Activated CD4-positive, alpha-beta T cell treated with anti-CD3 and anti-CD28 coated beads for 36 hours (primary cell): ENCODE measurements at regions of chr6 and their contacts with region 1.

Region 1: DNA sequence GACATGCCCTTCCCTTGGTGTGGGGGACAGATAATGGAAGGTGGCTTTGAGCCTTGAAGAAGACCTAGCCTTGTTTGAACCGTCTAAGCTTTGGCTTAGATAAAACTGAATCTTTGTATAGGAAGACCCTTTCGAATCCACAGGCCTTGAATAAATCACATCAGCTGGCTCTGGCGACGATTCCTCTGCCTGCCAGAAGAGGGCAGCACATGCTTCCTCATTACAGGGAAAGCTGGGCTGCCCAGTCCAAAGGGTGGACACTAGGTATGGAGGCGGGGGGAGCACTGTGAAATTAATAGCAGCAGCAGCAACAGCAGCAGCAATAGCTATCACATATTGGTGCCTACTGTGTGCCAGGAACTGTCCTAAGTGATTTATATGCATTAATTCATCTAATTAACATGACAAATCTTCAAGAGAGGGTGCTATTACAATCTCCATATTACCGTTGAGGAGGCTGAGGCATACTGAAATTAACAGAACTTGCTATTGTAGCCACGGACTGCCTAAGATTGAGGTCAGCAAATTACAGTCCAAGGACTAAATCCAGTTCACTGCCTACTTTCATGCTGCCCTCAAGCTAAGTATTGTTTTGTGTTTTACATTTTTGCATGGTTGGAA is 85.1 kb downstream of the CLIC5 start:
- DNase-seq: peak; percentile 74
- ATAC-seq: peak; percentile 42
- H3K4me3 Mint-ChIP-seq: no peak overlapping the region
- H3K27ac Mint-ChIP-seq: no peak overlapping the region
- H3K4me1 Mint-ChIP-seq: peaks cover 3% of the 10 kb centered on the region
- H3K27me3 Mint-ChIP-seq: no peaks in the 10 kb centered on the region

Region 2: GRCh38 chr6:45946352-45946751 is 15.8 kb after region 1 on chr6:
- CTCF ChIA-PET with region 1: interaction called, 11 read pairs
- POLR2A ChIA-PET with region 1: no interaction called
- intact Hi-C with region 1: no loop called
- DNase-seq: peak; percentile 26
- ATAC-seq: no peak
- H3K4me3 Mint-ChIP-seq: no peak overlapping the region
- H3K27ac Mint-ChIP-seq: no peak overlapping the region
- H3K4me1 Mint-ChIP-seq: no peaks in the 10 kb centered on the region
- H3K27me3 Mint-ChIP-seq: no peaks in the 10 kb centered on the region

Region 3: DNA sequence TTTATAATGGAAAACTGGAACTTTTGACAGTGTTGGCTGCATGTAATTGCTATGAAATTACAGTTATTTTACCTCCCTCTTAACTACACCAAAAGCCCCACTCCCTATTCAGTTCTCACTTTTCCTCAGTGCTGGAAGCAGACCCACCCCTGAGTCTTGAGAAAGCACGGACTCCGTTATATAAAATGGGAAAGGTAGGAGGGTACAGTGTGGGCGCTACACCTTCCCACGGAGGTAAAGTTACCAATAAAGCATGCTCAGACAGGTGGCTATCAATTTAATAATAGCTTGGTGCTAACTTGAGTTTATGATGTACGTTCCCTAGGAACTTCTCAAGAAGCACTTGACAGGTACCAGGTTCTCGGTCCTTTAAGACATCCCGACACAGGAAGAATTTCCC is 26.1 kb after region 1 on chr6:
- CTCF ChIA-PET with region 1: no interaction called
- POLR2A ChIA-PET with region 1: no interaction called
- intact Hi-C with region 1: no loop called
- DNase-seq: no peak
- ATAC-seq: no peak
- H3K4me3 Mint-ChIP-seq: no peak overlapping the region
- H3K27ac Mint-ChIP-seq: no peak overlapping the region
- H3K4me1 Mint-ChIP-seq: no peaks in the 10 kb centered on the region
- H3K27me3 Mint-ChIP-seq: peaks cover 4% of the 10 kb centered on the region

Region 4: DNA sequence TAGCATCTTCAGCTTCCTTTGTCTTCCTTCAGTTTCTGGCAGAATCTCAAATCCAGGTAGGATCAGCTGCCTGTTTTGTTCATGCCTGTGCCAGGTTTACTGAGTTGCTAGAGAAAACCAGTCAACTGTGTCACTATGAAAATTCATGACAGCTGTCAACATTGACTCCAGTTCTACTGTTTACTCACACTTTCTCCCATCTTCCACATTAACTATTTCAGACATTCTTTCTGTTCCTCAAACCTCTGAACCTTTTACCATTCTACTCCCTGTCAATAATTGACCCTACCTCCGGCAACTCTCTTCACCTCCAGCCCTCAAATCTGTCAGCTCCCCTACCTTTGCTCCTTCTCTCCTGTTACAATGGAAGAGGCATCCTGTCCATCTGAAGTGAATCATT is 207.8 kb after region 1 on chr6:
- CTCF ChIA-PET with region 1: no interaction called
- POLR2A ChIA-PET with region 1: no interaction called
- intact Hi-C with region 1: no loop called
- DNase-seq: no peak
- ATAC-seq: no peak
- H3K4me3 Mint-ChIP-seq: no peak overlapping the region
- H3K27ac Mint-ChIP-seq: no peak overlapping the region
- H3K4me1 Mint-ChIP-seq: peaks cover 27% of the 10 kb centered on the region
- H3K27me3 Mint-ChIP-seq: no peaks in the 10 kb centered on the region

Region 5: DNA sequence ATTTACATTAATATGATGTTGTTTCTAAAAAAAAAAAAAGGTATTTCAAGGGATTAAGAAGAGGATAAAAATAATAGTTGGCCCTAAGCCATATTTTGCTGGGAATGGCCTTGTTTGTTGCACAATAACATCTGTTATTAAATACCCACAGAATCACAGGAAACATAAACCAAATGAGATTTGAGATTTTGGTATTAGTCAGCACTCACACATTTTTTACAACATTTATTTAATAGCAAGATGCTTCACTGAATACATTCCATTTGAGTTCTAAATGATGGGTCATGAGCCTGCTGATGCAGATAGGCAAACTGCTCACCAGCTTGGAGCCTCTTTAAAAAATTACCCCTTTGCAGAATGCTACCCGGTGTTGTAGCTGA is 333.2 kb after region 1 on chr6:
- CTCF ChIA-PET with region 1: no interaction called
- POLR2A ChIA-PET with region 1: no interaction called
- intact Hi-C with region 1: no loop called
- DNase-seq: no peak
- ATAC-seq: no peak
- H3K4me3 Mint-ChIP-seq: no peak overlapping the region
- H3K27ac Mint-ChIP-seq: no peak overlapping the region
- H3K4me1 Mint-ChIP-seq: no peaks in the 10 kb centered on the region
- H3K27me3 Mint-ChIP-seq: peaks cover 2% of the 10 kb centered on the region

Region 6: DNA sequence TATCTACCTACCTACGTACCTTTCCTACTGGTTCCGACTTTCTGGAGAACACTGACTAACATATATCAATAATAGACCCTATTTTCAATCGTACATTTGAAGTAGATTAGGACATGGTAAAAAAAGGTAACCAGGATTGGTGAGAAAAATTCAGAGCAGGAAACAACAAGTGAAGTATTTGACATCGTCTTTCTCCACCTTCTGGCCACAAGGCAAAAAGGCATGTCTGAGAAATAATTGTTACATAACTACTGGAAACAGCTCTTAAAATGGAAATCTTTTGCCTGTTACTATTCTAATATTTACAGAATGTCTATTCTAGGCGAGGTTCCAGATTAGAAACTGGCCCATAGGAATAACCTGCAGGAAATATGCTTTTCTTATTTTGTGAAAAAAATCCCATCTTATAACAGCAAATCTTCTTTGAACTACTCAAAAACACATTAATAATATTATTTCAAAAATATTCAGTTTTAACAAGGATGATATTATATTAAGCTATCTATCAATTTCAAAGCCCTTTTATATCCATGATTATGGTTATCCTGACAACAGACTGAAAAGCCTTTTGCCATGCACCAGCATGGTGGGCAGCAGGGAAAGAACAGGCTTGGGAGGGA is 479.9 kb after region 1 on chr6:
- CTCF ChIA-PET with region 1: interaction called, 9 read pairs
- POLR2A ChIA-PET with region 1: no interaction called
- intact Hi-C with region 1: loop called (anchors 1 to 5 kb)
- DNase-seq: peak; percentile 22
- ATAC-seq: no peak
- H3K4me3 Mint-ChIP-seq: no peak overlapping the region
- H3K27ac Mint-ChIP-seq: no peak overlapping the region
- H3K4me1 Mint-ChIP-seq: no peaks in the 10 kb centered on the region
- H3K27me3 Mint-ChIP-seq: peaks cover 5% of the 10 kb centered on the region

Region 7: DNA sequence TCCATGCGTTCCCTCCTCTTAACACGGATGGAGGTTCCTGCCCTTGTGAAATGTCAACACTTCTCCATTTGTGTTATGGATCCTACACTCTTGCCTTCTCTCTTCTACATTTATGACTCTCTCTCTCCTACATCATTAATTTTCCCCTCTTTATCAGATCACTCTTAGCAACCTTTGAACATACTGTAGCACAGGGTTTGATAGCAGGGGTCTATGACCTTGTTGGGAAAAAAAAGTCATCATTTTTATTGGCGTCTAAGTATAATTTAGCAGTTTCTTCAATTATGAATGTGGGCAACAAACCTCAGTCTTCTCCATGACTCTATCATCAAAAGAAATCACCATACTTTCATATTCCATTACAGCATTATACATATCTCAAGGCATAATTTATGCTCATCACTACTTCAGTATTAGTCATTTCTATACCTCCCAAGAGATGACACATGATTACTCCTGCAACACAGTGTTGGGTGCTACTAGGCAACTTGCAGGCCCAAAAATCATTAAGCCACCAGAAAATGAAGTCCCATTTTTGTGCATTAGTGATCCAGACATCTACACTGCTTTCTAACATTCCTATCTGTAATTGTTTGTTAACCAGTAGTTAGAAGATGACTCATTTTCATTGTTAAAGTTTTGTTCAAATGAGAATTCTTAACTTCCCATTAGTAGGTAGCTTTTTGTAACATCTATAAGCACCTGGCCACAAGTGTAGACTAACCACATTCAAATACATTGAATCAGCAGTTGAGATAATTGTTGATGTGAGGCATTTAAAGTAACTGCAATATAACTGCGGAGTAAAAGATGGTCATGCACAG is 712.6 kb after region 1 on chr6:
- CTCF ChIA-PET with region 1: no interaction called
- POLR2A ChIA-PET with region 1: no interaction called
- intact Hi-C with region 1: loop called in 1 of 2 experiments (anchors 5 kb)
- DNase-seq: peak; percentile 12
- ATAC-seq: peak; percentile 99
- H3K4me3 Mint-ChIP-seq: no peak overlapping the region
- H3K27ac Mint-ChIP-seq: no peak overlapping the region
- H3K4me1 Mint-ChIP-seq: peaks cover 15% of the 10 kb centered on the region
- H3K27me3 Mint-ChIP-seq: peaks cover 25% of the 10 kb centered on the region